AG04449 (cell line): ENCODE measurements at regions of chr10 and their contacts with region 1.

Region 1: DNA sequence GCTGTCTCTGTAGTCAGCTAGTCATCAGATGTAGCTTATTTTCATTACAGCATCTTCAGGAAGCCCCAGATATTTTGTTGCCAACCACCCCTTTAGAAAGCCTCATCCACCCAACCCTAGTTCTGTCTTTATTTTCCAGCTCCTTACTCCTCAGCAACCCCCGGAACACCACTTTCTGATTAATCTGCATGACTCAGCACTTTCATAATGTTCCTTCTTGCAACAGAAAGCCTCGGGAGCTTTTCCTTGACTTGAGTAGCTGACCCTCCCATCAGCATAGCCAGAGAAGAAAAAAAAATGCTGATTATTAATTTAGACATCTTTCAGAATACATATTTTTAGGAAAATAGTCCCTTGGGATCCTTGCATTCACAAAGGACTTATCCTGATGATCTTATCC is 244.0 kb upstream of the CXCL12 start:
- DNase-seq: peak; percentile 64
- H3K4me3 ChIP-seq: no peak overlapping the region
- CTCF ChIP-seq: no peak

Region 2: DNA sequence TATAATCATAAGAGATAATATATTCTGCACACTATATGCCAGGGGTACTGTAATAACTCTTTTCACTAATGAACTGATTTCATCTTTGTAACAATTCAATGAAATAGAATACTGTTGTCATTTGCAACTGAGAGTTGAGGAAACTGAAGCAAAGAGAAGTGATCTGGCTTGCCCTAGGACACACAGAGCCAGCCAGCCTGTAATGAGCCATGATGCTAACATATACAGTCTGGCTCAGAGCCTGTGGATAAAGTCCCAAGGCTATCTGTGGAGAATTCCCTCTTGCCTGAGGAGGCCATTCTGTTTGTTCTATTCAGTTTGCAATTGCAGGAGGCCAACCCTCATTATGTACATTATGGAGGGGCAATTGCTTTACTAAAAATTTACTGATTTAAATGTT is 485.4 kb before region 1 on chr10:
- CTCF ChIA-PET with region 1: no interaction called
- POLR2A ChIA-PET with region 1: no interaction called
- DNase-seq: no peak
- H3K4me3 ChIP-seq: no peak overlapping the region
- CTCF ChIP-seq: no peak

Region 3: DNA sequence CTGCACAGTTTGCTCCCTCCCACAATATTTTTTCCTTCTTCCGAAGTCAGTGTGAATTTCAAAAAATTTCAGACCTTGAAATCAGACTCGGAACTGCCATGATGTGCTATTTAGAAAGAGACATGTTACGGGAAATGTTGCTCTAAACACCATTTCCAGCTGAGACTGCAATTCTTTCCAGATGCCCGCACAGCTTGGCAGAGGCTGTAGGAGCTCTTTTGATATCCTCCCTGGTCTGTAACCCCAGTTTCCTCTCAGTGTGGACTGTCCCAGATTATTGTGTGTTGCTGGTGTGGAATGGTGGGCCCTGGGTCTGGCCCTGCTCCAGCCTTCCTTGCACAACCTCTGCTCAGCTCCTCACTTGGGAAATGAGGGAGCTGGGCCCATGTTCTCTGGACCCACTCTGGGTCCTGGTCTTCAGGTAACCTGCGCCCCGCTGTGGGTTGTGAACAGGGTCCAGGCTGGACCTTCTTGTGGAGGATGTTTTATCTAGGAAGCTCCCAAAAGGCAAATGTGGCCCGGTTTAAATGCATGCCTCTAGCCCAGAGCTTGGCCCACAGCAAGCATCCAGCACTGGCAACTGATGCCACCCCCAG is 71.2 kb before region 1 on chr10:
- CTCF ChIA-PET with region 1: no interaction called
- POLR2A ChIA-PET with region 1: no interaction called
- DNase-seq: no peak
- H3K4me3 ChIP-seq: no peak overlapping the region
- CTCF ChIP-seq: no peak

Region 4: GRCh38 chr10:44650691-44651661 is 22.1 kb after region 1 on chr10:
- CTCF ChIA-PET with region 1: interaction called, 10 read pairs
- POLR2A ChIA-PET with region 1: no interaction called
- DNase-seq: no peak
- H3K4me3 ChIP-seq: no peak overlapping the region
- CTCF ChIP-seq: no peak

Region 5: GRCh38 chr10:44696496-44696895 is 67.6 kb after region 1 on chr10:
- CTCF ChIA-PET with region 1: no interaction called
- POLR2A ChIA-PET with region 1: no interaction called
- DNase-seq: peak; percentile 63
- H3K4me3 ChIP-seq: no peak overlapping the region
- CTCF ChIP-seq: no peak